Motor neuron (in vitro differentiated cells): ENCODE measurements at regions of chr5 and their contacts with region 1.

Region 1: DNA sequence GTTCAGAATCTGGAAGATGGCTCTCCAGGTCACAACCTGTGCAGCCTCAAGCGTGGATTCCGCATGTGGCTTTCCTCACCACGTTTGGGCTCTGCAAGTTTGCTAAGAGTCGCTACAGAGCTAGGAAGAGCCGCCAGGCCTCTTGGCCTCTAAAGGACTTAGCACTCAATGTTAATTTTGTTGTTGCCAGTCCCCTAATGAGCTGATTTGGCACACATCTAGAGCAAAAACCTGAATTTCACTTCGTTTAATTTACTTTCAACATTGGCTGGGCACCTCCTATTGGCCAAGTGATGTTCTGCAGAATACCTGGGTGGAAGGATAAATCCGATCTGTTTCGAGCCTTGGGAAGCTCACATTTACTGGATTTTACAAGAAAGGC is 65.8 kb upstream of the UNC5A start:
- ATAC-seq: no peak
- H3K4me3 ChIP-seq: no peak overlapping the region
- H3K27ac ChIP-seq: no peak overlapping the region
- H3K4me1 ChIP-seq: peaks cover 24 to 43% of the 10 kb centered on the region in 2 donors

Region 2: DNA sequence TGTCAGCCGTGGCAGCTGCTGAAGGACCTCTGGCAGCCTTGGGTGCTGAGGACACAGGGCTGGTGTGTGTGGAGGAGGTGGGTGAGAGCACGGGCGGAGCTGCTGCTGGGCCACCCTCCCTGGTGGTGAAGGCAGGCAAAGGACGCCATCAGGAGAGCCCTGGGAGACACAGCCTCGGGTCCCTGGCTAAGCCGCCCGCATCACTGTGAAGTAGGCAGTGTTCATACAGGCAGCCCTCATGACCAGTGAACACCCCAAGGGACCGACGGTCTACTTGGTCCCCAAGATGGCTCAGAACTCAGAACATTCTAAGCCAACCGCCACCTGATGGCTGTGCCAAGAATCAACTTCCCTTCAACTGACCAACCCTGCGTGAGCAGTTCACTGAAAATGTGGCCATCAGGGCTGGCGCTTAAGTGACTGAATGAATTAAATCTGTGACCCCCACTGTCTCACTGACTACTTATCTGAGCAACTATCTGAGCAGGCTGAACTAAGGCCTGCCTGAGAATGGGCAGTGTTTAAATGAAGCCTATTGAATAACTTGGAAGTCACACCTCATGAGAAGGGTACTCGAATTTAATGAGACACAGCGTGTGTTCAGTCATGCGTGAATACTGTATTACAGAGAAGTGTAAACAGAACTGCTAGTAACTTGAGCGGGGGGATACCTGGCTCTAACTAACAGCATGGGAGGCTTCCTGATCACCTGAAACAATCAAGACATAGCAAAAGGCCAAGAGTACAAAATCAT is 561.1 kb before region 1 on chr5:
- in situ Hi-C with region 1: no loop called
- ATAC-seq: peak in 1 of 8 experiments; percentile 4
- H3K4me3 ChIP-seq: no peak overlapping the region
- H3K27ac ChIP-seq: no peak overlapping the region
- H3K4me1 ChIP-seq: peaks cover 0 to 5% of the 10 kb centered on the region in 2 donors

Region 3: GRCh38 chr5:176837707-176838115 is 93.1 kb after region 1 on chr5:
- in situ Hi-C with region 1: loop called in 1 of 9 experiments (anchors 25 kb)
- ATAC-seq: peak; percentile 50 to 100 (median 76)
- H3K4me3 ChIP-seq: no peak overlapping the region
- H3K27ac ChIP-seq: no peak overlapping the region
- H3K4me1 ChIP-seq: peaks cover 28 to 40% of the 10 kb centered on the region in 2 donors

Region 4: DNA sequence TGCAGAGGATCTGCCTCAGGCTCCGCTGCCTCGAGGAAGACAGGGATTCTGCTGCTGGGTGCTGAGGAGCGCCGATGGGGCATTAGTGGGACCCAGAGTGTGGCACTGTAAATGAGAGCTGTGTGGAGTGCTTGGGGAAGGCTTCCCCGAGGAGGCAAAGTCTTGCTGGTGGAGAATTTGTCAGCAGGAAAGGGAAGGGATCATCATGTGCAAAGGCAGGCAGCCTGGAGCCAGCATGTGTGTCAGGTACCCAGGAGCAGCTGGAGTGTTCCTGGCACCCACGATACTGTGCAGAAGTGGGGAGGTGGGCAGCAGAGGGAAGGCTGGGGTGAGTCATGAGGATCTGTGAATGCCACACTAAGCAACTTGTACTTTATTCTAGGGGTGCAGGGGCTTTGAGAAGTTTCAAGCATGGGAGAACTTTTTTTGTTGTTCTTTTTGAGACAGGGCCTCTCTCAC is 867.7 kb after region 1 on chr5:
- in situ Hi-C with region 1: no loop called
- ATAC-seq: no peak
- H3K4me3 ChIP-seq: no peak overlapping the region
- H3K27ac ChIP-seq: no peak overlapping the region
- H3K4me1 ChIP-seq: peaks cover 0 to 9% of the 10 kb centered on the region in 2 donors